Panc1 (cell line): ENCODE measurements at regions of chr5 and their contacts with region 1.

Region 1: DNA sequence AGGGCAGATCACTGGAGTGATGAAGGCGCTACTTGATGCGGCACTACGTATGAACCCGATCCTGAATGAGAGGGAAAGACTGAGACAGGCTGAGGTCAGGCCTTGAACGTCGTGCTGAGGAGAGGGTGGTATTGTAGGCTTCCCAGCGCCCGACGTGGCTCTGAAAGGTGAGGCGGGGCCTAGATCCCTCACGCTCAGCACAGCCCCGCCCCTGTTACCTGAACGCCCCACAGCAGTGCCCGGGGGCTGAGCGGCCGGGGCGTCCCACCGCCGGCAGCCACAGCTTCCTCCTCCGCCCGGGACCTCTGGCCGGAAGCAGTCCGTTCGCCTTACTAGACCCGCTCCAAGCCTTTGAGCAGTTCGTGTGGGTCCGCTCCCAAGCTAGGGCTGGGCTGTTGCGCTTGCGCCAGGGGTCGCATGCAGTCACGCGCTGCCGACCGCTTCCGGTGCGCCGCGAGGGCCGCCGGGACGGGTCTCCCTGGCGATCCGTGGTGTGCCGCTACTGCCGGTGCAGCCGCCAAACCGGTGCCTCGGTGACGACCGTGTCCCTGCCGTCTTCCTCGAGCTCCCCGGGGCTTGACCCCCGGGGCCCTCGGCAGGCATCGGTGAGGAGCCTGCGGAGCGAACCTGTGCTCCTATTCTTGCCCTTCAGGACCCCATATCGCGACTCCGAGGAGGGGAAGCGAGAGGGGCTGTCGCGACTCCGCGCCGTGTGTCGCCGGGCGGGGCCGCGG is at the starts of genes HMGXB3 and TIGD6:
- DNase-seq: peak; percentile 69
- ATAC-seq: peak; percentile 97
- H3K4me3 ChIP-seq: peak within 1 kb of the TSS; percentile 92 to 100
- H3K27ac ChIP-seq: peak within 1 kb of the TSS; percentile 97
- H3K4me1 ChIP-seq: peaks cover 17% of the 10 kb centered on the region
- H3K27me3 ChIP-seq: no peaks in the 10 kb centered on the region
- CTCF ChIP-seq: no peak
- total RNA-seq, gene HMGXB3: 56.2 TPM
- total RNA-seq, gene TIGD6: 7.1 TPM

Region 2: GRCh38 chr5:150016537-150016936 is 16.1 kb after region 1 on chr5:
- CTCF ChIA-PET with region 1: interaction called, 6 read pairs
- POLR2A ChIA-PET with region 1: interaction called, 17 read pairs
- in situ Hi-C with region 1: no loop called
- intact Hi-C with region 1: no loop called
- DNase-seq: no peak
- ATAC-seq: no peak
- H3K4me3 ChIP-seq: no peak overlapping the region
- H3K27ac ChIP-seq: no peak overlapping the region
- H3K4me1 ChIP-seq: peaks cover 7% of the 10 kb centered on the region
- H3K27me3 ChIP-seq: no peaks in the 10 kb centered on the region
- CTCF ChIP-seq: no peak